T-cell (primary cell): ENCODE measurements at regions of chr7 and their contacts with region 1.

Region 1: GRCh38 chr7:66233638-66234037 is 28.5 kb downstream of the TPST1 start:
- DNase-seq: no peak
- ATAC-seq: no peak
- H3K4me3 ChIP-seq: no peak overlapping the region
- H3K4me3 Mint-ChIP-seq: no peak overlapping the region
- H3K27ac ChIP-seq: no peak overlapping the region
- H3K27ac Mint-ChIP-seq: no peak overlapping the region
- H3K4me1 ChIP-seq: no peaks in the 10 kb centered on the region
- H3K4me1 Mint-ChIP-seq: peaks cover 3 to 13% (median 6%) of the 10 kb centered on the region in 3 donors
- H3K27me3 ChIP-seq: no peaks in the 10 kb centered on the region
- H3K27me3 Mint-ChIP-seq: no peaks in the 10 kb centered on the region

Region 2: GRCh38 chr7:66454600-66455225 is 221.1 kb after region 1 on chr7:
- CTCF ChIA-PET with region 1: no interaction called
- POLR2A ChIA-PET with region 1: interaction called in 1 of 2 experiments, 16 read pairs
- DNase-seq: no peak
- ATAC-seq: no peak
- H3K4me3 ChIP-seq: no peak overlapping the region
- H3K4me3 Mint-ChIP-seq: no peak overlapping the region
- H3K27ac ChIP-seq: no peak overlapping the region
- H3K27ac Mint-ChIP-seq: no peak overlapping the region
- H3K4me1 ChIP-seq: no peaks in the 10 kb centered on the region
- H3K4me1 Mint-ChIP-seq: peaks cover 0 to 11% (median 10%) of the 10 kb centered on the region in 3 donors
- H3K27me3 ChIP-seq: no peaks in the 10 kb centered on the region
- H3K27me3 Mint-ChIP-seq: no peaks in the 10 kb centered on the region